T-cell (primary cell): ENCODE measurements at regions of chr2 and their contacts with region 1.

Region 1: DNA sequence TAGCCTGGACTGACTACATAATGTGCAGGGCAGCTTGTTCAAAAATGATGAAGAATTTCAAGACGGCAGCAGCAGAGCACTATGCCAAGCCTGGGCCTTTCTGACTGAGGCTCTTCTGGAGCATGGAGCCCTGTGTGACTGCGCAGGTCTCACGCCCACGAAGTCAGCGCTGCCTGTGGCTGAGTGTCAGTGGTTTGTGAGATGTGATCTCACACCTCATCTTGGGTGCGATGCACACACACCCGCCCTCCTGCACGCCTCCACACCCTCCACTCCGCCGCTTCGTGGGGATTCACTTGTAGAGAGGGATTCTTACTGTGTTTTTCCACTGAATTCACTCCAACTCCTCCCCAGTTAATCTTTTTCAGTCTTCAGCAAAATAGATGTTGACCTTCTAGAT is 103.9 kb downstream of the VIT start:
- DNase-seq: peak in 33 of 35 experiments; percentile 2 to 75 (median 44)
- ATAC-seq: peak; percentile 43 to 77 (median 68)
- H3K4me3 ChIP-seq: no peak overlapping the region
- H3K4me3 Mint-ChIP-seq: no peak overlapping the region
- H3K27ac ChIP-seq: peak overlapping the region; percentile 51
- H3K27ac Mint-ChIP-seq: peak overlapping the region in 1 of 2 donors; percentile 33
- H3K4me1 ChIP-seq: peaks cover 0 to 58% of the 10 kb centered on the region in 2 experiments
- H3K4me1 Mint-ChIP-seq: peaks cover 0 to 18% (median 12%) of the 10 kb centered on the region in 3 donors
- H3K27me3 ChIP-seq: no peaks in the 10 kb centered on the region
- H3K27me3 Mint-ChIP-seq: peaks cover 13 to 22% of the 10 kb centered on the region in 2 donors

Region 2: GRCh38 chr2:36785179-36785795 is 15.1 kb before region 1 on chr2:
- CTCF ChIA-PET with region 1: interaction called, 5 to 19 read pairs
- POLR2A ChIA-PET with region 1: no interaction called
- DNase-seq: peak; percentile 7 to 79 (median 46)
- ATAC-seq: peak; percentile 65 to 82 (median 78)
- H3K4me3 ChIP-seq: no peak overlapping the region
- H3K4me3 Mint-ChIP-seq: no peak overlapping the region
- H3K27ac ChIP-seq: no peak overlapping the region
- H3K27ac Mint-ChIP-seq: no peak overlapping the region
- H3K4me1 ChIP-seq: peaks cover 0 to 9% of the 10 kb centered on the region in 2 experiments
- H3K4me1 Mint-ChIP-seq: peaks cover 0 to 4% (median 0%) of the 10 kb centered on the region in 3 donors
- H3K27me3 ChIP-seq: no peaks in the 10 kb centered on the region
- H3K27me3 Mint-ChIP-seq: peaks cover 13 to 16% of the 10 kb centered on the region in 2 donors

Region 3: DNA sequence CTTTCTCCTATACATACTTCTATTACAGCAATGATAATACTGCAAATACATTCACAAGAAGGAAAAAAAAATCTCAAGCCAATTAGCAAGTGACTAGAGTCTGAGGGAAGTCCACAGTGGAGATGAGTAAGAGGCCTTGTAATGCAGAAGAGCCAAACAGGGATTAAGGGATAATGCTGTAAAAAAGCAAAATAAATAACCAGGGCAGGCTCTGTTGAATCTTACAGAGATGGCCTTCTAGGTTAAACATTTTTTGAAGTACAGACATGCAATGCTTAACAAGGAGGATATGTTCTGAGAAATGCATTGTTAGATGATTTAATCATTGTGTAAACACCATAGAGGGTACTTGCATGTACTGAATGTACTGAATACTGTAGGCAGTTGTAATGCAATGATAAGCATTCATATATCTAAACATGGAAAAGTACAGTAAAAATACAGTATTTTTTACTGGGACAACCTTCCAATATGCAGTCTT is 1002.6 kb after region 1 on chr2:
- CTCF ChIA-PET with region 1: no interaction called
- POLR2A ChIA-PET with region 1: no interaction called
- DNase-seq: no peak
- ATAC-seq: no peak
- H3K4me3 ChIP-seq: no peak overlapping the region
- H3K4me3 Mint-ChIP-seq: no peak overlapping the region
- H3K27ac ChIP-seq: no peak overlapping the region
- H3K27ac Mint-ChIP-seq: no peak overlapping the region
- H3K4me1 ChIP-seq: no peaks in the 10 kb centered on the region
- H3K4me1 Mint-ChIP-seq: peaks cover 0 to 2% (median 0%) of the 10 kb centered on the region in 3 donors
- H3K27me3 ChIP-seq: no peaks in the 10 kb centered on the region
- H3K27me3 Mint-ChIP-seq: no peaks in the 10 kb centered on the region